Heart right ventricle (tissue), 16 donors: ENCODE measurements at regions of chr5 and their contacts with region 1.

Region 1: GRCh38 chr5:66306105-66306843 is 162.2 kb downstream of the SREK1 start:
- DNase-seq: peak in 1 of 2 donors; percentile 46
- ATAC-seq: peak in 7 of 8 donors; percentile 70 to 89 (median 79)
- H3K4me3 ChIP-seq: no peak overlapping the region
- H3K27ac ChIP-seq: peak overlapping the region in 3 of 10 donors; percentile 9 to 60 (median 22)
- H3K4me1 ChIP-seq: peaks cover 0 to 32% (median 23%) of the 10 kb centered on the region in 9 donors
- H3K27me3 ChIP-seq: peaks cover 0 to 3% (median 0%) of the 10 kb centered on the region in 7 donors
- CTCF ChIP-seq: peak; percentile 65 to 88 (median 79)

Region 2: GRCh38 chr5:66440202-66440680 is 134.0 kb after region 1 on chr5:
- intact Hi-C with region 1: loop called in 3 of 10 experiments (anchors 5 kb)
- DNase-seq: peak in 1 of 2 donors; percentile 68
- ATAC-seq: peak; percentile 64 to 92 (median 88)
- H3K4me3 ChIP-seq: peak overlapping the region in 9 of 10 donors; percentile 23 to 55 (median 50)
- H3K27ac ChIP-seq: peak overlapping the region in 9 of 10 donors; percentile 35 to 83 (median 68)
- H3K4me1 ChIP-seq: peaks cover 0 to 26% (median 11%) of the 10 kb centered on the region in 9 donors
- H3K27me3 ChIP-seq: no peaks in the 10 kb centered on the region
- CTCF ChIP-seq: no peak

Region 3: GRCh38 chr5:66582499-66583165 is 276.4 kb after region 1 on chr5:
- intact Hi-C with region 1: loop called in 1 of 10 experiments (anchors 10 kb)
- DNase-seq: no peak
- ATAC-seq: peak in 5 of 8 donors; percentile 29 to 68 (median 36)
- H3K4me3 ChIP-seq: no peak overlapping the region
- H3K27ac ChIP-seq: peak overlapping the region in 5 of 10 donors; percentile 6 to 19 (median 11)
- H3K4me1 ChIP-seq: peaks cover 0 to 16% (median 6%) of the 10 kb centered on the region in 9 donors
- H3K27me3 ChIP-seq: peaks cover 0 to 7% (median 0%) of the 10 kb centered on the region in 7 donors
- CTCF ChIP-seq: no peak

Region 4: DNA sequence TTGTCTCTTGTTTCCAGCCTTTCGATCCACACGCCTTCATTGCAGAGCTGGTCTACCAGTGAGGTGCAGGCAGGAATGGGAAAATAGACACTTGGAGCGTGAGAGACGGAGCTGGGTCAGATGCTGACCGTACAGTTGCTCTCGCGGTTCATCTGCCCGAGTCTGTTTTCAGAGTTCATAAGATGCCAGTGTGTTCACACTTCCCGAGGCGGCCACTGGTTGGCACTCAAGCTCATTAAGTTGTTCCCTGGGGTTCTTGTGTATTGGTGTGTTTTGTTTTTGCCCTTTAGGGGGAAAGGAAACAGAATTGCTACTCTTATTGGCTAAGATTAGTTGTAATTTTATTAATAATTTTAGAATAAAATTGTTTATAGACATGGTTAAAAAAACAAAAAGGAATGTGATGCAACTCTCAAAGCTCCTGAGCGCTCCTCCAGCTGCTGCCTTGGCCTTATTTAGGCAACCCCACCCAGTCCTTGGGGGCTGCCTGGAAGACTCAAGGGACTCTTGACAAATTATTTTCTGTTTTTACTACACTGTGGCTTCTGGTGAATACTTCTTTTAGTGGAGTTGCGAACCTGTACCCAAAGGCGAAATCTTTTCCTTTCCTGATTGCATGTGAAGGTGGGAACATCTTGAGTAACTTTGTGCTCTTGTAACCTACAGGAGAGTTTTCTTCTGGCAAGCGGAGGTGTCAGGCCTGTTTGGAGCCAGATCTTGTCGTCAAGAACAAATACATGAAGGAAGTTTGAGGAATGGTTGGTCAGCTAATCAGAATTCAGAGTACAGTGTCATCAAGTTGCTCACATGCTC is 436.0 kb after region 1 on chr5:
- intact Hi-C with region 1: loop called in 1 of 10 experiments (anchors 10 kb)
- DNase-seq: peak; percentile 28 to 37
- ATAC-seq: peak in 7 of 8 donors; percentile 32 to 67 (median 52)
- H3K4me3 ChIP-seq: no peak overlapping the region
- H3K27ac ChIP-seq: peak overlapping the region in 8 of 10 donors; percentile 2 to 76 (median 19)
- H3K4me1 ChIP-seq: peaks cover 12 to 67% (median 44%) of the 10 kb centered on the region in 9 donors
- H3K27me3 ChIP-seq: no peaks in the 10 kb centered on the region
- CTCF ChIP-seq: peak; percentile 20 to 58 (median 51)

Region 5: GRCh38 chr5:66764982-66765381 is 458.7 kb after region 1 on chr5:
- intact Hi-C with region 1: loop called in 2 of 10 experiments (anchors 5 kb)
- DNase-seq: no peak
- ATAC-seq: no peak
- H3K4me3 ChIP-seq: no peak overlapping the region
- H3K27ac ChIP-seq: no peak overlapping the region
- H3K4me1 ChIP-seq: peaks cover 0 to 19% (median 6%) of the 10 kb centered on the region in 9 donors
- H3K27me3 ChIP-seq: no peaks in the 10 kb centered on the region
- CTCF ChIP-seq: no peak

Region 6: DNA sequence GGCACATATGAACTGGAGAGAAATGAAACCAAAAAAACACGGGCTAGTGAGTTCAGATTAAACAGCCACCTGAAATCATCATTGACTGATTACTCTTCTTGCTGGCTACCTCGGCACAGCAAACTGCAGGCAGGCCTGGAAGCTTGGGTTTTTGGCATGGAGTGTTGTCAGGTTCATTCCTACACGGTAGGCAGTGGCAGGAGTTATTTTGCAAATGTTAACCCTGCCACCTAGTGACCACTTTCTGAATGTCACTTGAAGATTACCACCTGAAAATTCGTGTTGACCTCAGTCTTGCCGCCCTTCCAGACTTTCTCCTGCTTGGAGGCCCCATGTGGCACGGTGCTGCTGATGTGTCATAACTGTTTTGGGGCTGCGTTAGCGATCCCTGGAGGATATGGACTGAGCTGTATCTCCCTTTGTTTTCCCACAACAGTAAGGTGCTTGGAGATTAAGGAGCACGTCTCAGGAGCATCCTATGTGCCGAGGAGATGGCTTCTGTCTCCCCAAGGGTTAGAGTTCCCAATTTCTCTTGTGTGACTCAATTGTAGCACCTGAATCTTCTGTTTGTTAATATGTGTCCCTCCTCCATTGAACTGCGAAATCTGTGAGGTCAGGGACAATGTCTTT is 903.0 kb after region 1 on chr5:
- intact Hi-C with region 1: loop called in 3 of 10 experiments (anchors 10 kb)
- DNase-seq: peak in 1 of 2 donors; percentile 80
- ATAC-seq: peak; percentile 69 to 87 (median 84)
- H3K4me3 ChIP-seq: no peak overlapping the region
- H3K27ac ChIP-seq: peak overlapping the region in 1 of 10 donors; percentile 84
- H3K4me1 ChIP-seq: peaks cover 0 to 54% (median 6%) of the 10 kb centered on the region in 9 donors
- H3K27me3 ChIP-seq: no peaks in the 10 kb centered on the region
- CTCF ChIP-seq: peak; percentile 62 to 88 (median 81)